ENCODE measurements at regions of chr5 and their contacts with region 1.

Region 1: DNA sequence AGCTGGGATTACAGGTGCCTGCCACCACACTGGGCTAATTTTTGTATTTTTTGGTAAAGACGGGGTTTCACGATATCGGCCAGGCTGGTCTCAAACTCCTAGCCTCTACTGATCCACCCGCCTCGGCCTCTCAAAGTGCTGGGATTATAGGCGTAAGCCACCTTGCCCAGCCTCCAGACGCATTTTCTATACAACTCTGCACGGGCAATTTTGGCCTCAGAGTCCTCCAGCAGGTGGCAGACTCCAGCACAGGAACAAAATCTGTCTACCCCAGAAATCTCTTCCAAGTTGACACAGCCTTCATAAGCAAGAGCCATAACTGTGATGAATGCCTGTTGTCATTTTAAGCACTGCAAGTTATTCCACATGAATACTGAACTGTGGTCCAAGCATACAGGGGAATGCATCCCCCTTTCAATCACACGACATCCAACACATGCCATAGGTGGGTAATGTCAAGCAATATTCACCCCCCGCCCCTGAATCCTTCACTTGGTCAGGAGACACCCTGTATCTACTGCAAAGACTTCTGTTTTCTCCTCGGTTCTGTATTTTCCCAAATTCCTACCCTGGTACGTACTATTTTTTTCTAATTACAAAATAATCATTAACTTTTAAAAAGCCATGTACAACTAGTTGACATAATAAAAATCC is 50.8 kb downstream of the ALDH7A1 start:
- DNase-seq: no peak

Region 2: DNA sequence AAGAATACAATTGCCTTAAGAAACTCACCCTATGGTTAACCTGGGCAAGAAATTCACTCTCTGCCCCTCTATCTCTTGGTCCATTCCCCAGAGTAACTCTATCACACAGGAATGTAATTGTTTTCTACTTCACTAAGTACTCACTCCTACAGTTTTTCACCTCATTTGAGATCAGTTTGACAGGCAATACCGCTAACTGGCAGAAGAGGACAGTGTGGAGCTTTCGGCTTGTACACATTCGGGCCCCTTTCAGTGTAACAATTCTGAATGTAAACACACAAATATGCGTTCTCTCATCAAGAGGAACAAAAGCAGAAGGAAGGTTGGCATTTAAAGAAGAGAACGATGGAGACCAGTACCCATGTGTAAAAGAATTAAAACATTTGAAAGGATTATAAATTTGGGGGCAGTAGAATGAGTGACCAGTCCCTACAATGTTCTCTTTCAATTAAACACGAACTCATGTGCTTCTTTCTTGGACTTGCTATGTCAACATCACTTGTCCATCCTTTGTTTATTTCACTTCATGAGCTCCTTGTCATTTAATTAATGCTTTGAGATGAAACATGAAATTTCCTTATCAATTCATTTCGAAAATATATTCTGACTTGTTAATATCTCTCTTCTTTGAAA is 309.5 kb before region 1 on chr5:
- in situ Hi-C with region 1: loop called (anchors 25 kb)
- DNase-seq: peak; percentile 54

Measured in Caki2 (cell line).